Gastrocnemius medialis (tissue), 4 donors: ENCODE measurements at regions of chrX and their contacts with region 1.

Region 1: DNA sequence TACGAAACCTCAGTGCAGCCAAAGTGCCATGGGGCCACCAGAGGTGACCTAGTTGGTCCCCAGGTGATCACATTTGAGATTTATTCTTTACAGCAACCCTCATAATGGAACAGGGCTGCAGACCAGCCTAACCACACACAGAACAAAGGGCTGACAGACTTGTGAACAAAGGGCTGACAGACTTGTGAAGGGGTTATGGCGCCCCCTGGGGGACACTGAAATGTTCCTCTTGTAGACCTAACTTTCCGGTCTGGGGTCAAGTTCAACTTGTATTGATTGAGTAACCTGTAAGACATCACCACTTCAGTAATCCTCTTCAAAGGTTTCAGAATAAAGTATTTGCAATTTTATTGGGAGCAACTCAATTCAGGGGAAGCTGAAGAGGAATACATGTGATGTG is 175.9 kb upstream of the RPS6KA3 start:
- DNase-seq: peak; percentile 50 to 72
- ATAC-seq: peak; percentile 76 to 95
- H3K4me3 ChIP-seq: no peak overlapping the region
- H3K27ac ChIP-seq: no peak overlapping the region
- H3K4me1 ChIP-seq: no peaks in the 10 kb centered on the region
- H3K27me3 ChIP-seq: no peaks in the 10 kb centered on the region
- CTCF ChIP-seq: peak; percentile 42 to 72 (median 68)
- POLR2A ChIP-seq: no peak

Region 2: DNA sequence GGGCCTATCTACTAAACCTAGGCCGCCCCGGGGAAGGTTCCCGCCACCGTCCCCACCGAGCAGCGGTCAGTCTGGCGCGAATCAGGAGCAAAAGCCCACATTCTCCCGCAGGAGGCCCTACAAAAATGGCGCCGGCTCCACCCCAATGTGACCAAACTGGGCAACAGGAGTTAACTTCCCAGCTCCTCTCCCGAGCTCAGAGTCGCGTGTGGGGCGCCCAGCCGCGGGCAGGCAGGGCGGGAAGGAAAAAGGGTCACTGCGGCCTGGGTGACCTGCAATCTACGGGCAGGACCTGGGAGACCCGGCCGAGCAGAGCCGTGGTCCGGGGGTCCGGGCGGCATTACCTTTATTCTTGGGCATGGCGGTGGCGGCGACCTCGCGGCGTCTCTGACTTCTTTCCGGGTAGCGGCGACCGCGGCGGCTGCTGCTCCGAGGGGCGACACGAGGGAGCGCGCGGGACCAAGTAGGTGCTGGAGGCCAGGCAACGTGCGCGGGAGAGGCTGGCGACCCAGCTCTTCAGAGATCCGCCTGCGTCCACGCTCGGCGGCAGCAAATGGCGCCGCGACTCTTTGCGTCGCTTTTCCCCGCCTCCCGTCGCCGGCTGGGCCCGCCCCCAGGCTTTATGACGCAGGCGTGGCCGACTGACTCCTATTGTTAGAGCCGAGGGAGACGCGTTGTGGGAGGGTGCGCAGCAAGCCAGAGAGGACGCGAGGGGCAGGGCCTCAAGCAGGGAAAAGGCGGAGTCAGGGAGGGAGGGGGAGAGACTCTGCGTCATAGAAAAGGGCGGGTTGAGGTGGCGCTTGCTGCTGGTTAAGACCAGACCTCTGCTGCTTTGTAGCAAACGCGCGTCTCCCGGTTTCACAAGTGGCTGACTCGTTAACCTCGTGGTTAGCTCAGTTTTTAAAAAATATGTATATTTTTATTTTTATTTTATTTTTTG is 301.0 kb before region 1 on chrX and contains the start of gene EIF1AX:
- in situ Hi-C with region 1: no loop called
- intact Hi-C with region 1: loop called (anchors 10 kb)
- DNase-seq: peak; percentile 94 to 97
- ATAC-seq: peak; percentile 97
- H3K4me3 ChIP-seq: peak within 1 kb of the TSS; percentile 71 to 98 (median 90)
- H3K27ac ChIP-seq: peak within 1 kb of the TSS; percentile 92 to 97 (median 95)
- H3K4me1 ChIP-seq: peaks cover 13 to 21% of the 10 kb centered on the region in 2 donors
- H3K27me3 ChIP-seq: no peaks in the 10 kb centered on the region
- CTCF ChIP-seq: no peak
- POLR2A ChIP-seq: peak; percentile 97 to 98
- total RNA-seq, gene EIF1AX: 61.0 to 124 (median 88.9) TPM

Region 3: GRCh38 chrX:20205927-20206708 is 236.5 kb before region 1 on chrX:
- in situ Hi-C with region 1: no loop called
- intact Hi-C with region 1: loop called (anchors 5 kb)
- DNase-seq: peak; percentile 17 to 60
- ATAC-seq: peak; percentile 85 to 94
- H3K4me3 ChIP-seq: no peak overlapping the region
- H3K27ac ChIP-seq: peak overlapping the region; percentile 13 to 86 (median 70)
- H3K4me1 ChIP-seq: peaks cover 21 to 40% of the 10 kb centered on the region in 2 donors
- H3K27me3 ChIP-seq: no peaks in the 10 kb centered on the region
- CTCF ChIP-seq: no peak
- POLR2A ChIP-seq: no peak

Region 4: GRCh38 chrX:20224814-20225487 is 217.6 kb before region 1 on chrX:
- in situ Hi-C with region 1: loop called in 2 of 4 experiments (anchors 25 kb)
- intact Hi-C with region 1: no loop called
- DNase-seq: no peak
- ATAC-seq: peak; percentile 47 to 69
- H3K4me3 ChIP-seq: no peak overlapping the region
- H3K27ac ChIP-seq: peak overlapping the region; percentile 57 to 80 (median 70)
- H3K4me1 ChIP-seq: peaks cover 10 to 48% of the 10 kb centered on the region in 2 donors
- H3K27me3 ChIP-seq: no peaks in the 10 kb centered on the region
- CTCF ChIP-seq: no peak
- POLR2A ChIP-seq: no peak

Region 5: GRCh38 chrX:20252381-20253231 is 190.0 kb before region 1 on chrX:
- in situ Hi-C with region 1: loop called in 3 of 4 experiments (anchors 10 to 25 kb)
- intact Hi-C with region 1: loop called (anchors 1 kb)
- DNase-seq: peak; percentile 4 to 44
- ATAC-seq: peak; percentile 36 to 77
- H3K4me3 ChIP-seq: no peak overlapping the region
- H3K27ac ChIP-seq: peak overlapping the region in 3 of 4 donors; percentile 34 to 74 (median 73)
- H3K4me1 ChIP-seq: peaks cover 5 to 18% of the 10 kb centered on the region in 2 donors
- H3K27me3 ChIP-seq: no peaks in the 10 kb centered on the region
- CTCF ChIP-seq: peak; percentile 40 to 68 (median 52)
- POLR2A ChIP-seq: no peak